CD8-positive, alpha-beta memory T cell (primary cell): ENCODE measurements at regions of chr4 and their contacts with region 1.

Region 1: DNA sequence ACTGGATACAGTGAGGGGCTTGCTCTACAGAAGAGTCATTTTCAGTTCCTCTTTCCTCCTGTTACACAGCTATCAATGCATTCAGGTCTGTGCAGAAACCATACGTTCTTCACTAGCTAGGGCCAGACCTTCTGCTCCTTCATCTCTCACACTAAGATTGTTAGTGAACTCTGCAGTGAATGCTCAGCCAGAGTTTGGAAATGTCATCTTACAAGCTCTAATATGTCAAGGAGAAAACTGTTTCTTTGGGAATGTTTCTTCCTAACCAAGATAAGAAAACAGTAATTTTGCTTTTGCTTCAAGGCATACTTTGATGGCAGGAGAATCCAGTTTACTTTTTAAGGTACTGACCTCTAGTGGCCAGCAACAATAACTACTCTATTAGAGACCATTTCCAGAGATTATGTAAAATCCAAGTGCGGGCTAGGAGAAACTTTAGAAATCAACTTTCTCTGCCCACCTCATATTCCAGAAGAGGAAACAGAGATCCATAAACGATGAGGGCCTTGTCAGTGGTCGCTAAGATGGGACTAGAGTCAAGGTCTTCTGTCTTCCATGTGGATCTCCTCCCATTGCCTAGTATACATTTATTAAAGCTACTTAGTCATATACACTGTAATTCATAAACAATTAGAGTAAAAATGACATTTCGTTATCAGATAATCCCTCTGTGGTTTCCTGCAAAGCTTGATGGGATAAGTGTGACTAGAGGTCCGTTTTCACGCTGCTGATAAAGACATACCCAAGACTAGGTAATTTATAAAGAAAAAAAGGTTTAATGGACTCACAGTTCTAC is 12.1 kb upstream of the CC2D2A start:
- DNase-seq: peak in 2 of 5 donors; percentile 21 to 49
- H3K4me3 ChIP-seq: no peak overlapping the region
- H3K4me3 Mint-ChIP-seq: no peak overlapping the region
- H3K27ac ChIP-seq: no peak overlapping the region
- H3K27ac Mint-ChIP-seq: peak overlapping the region in 1 of 8 donors; percentile 23
- H3K4me1 ChIP-seq: no peaks in the 10 kb centered on the region
- H3K4me1 Mint-ChIP-seq: no peaks in the 10 kb centered on the region
- H3K27me3 ChIP-seq: no peaks in the 10 kb centered on the region
- H3K27me3 Mint-ChIP-seq: peaks cover 0 to 2% of the 10 kb centered on the region in 2 donors

Region 2: DNA sequence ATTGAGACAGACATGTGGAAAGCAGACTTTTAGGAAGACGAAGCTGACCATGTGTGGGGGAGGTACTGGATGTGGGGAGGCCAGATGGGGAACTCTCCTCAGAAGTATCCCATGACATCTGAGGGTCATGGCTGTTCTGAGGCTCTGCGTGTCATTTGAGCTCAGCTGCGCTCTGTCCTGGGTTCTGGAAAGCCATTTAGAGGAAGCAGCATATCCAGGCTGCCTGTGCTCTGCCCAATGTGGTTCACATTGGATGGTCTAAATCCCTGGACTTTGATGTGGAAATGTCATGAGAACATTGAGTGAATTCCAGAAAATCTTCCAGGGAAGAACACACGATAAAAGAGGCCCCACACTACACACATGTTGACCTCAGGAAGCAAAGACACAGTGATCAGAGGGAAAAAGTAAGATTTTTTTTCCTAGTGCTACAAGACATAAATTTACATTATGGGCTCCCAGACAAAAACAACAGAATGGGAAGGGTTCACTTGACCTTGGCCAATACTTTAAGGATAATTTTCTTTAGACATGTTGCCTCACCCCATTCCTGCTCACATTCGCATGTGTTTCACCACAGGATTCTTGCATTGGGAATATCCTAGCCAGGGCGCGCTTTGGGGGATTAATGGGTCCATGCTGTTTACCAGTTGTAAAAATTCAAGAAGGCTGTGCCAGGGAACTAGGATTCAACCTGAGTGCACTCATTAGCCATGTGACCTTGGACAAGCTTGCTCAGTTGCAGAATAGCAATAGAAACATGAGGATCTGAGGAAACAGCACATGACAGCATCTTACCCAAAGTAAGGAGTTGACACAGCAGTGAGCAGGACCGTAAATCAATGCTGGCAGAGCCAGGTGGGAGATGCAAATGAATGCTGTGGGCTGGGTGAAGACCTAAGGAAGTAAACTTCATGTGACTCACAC is 103.0 kb before region 1 on chr4:
- CTCF ChIA-PET with region 1: no interaction called
- POLR2A ChIA-PET with region 1: no interaction called
- DNase-seq: no peak
- H3K4me3 ChIP-seq: no peak overlapping the region
- H3K4me3 Mint-ChIP-seq: no peak overlapping the region
- H3K27ac ChIP-seq: no peak overlapping the region
- H3K27ac Mint-ChIP-seq: no peak overlapping the region
- H3K4me1 ChIP-seq: no peaks in the 10 kb centered on the region
- H3K4me1 Mint-ChIP-seq: peaks cover 0 to 2% (median 2%) of the 10 kb centered on the region in 3 donors
- H3K27me3 ChIP-seq: no peaks in the 10 kb centered on the region
- H3K27me3 Mint-ChIP-seq: peaks cover 2 to 9% of the 10 kb centered on the region in 2 donors

Region 3: GRCh38 chr4:15469402-15470127 is 12.0 kb after region 1 on chr4 and contains the start of gene CC2D2A:
- CTCF ChIA-PET with region 1: interaction called, 33 read pairs
- POLR2A ChIA-PET with region 1: no interaction called
- DNase-seq: no peak
- H3K4me3 ChIP-seq: peak within 1 kb of the TSS; percentile 13
- H3K4me3 Mint-ChIP-seq: peak within 1 kb of the TSS; percentile 4 to 78 (median 64)
- H3K27ac ChIP-seq: no peak within 1 kb of the TSS
- H3K27ac Mint-ChIP-seq: peak within 1 kb of the TSS in 3 of 8 donors; percentile 9 to 35 (median 22)
- H3K4me1 ChIP-seq: peaks cover 9% of the 10 kb centered on the region
- H3K4me1 Mint-ChIP-seq: peaks cover 10 to 14% (median 10%) of the 10 kb centered on the region in 3 donors
- H3K27me3 ChIP-seq: no peaks in the 10 kb centered on the region
- H3K27me3 Mint-ChIP-seq: peaks cover 4 to 8% of the 10 kb centered on the region in 2 donors
- total RNA-seq, gene CC2D2A: not detected